ENCODE measurements at regions of chr1 and their contacts with region 1.

Region 1: GRCh38 chr1:63817152-63817667 is 43.4 kb downstream of the ROR1 start:
- DNase-seq: peak; percentile 65
- H3K4me3 Mint-ChIP-seq: peak overlapping the region; percentile 53
- H3K27ac Mint-ChIP-seq: peak overlapping the region; percentile 51
- H3K4me1 Mint-ChIP-seq: peaks cover 87% of the 10 kb centered on the region
- H3K27me3 Mint-ChIP-seq: no peaks in the 10 kb centered on the region
- CTCF ChIP-seq: no peak

Region 2: DNA sequence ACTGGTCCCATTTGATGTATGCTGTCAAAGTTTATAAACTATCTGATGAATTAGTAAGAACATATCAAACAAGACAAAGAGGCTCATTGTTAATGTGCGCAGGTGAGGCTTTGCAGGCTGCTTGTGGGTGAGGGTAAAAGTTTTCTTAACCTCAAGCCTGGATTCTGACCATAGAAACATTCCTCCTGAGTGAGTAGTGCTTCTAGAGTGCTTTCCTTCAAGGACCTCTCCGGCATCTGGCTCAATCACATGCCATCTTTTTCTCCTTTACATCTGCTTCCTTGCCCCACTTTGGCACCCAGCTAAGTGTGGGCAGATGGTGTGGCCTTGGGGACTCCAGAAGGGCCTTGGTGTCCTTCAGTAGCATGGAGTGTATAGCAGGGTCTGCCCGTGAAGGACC is 60.6 kb after region 1 on chr1:
- CTCF ChIA-PET with region 1: no interaction called
- intact Hi-C with region 1: loop called (anchors 5 kb)
- DNase-seq: peak; percentile 67
- H3K4me3 Mint-ChIP-seq: no peak overlapping the region
- H3K27ac Mint-ChIP-seq: peak overlapping the region; percentile 68
- H3K4me1 Mint-ChIP-seq: peaks cover 87% of the 10 kb centered on the region
- H3K27me3 Mint-ChIP-seq: no peaks in the 10 kb centered on the region
- CTCF ChIP-seq: no peak

Measured in Calu3 (cell line).